Right cardiac atrium (tissue), 5 donors: ENCODE measurements at regions of chr3 and their contacts with region 1.

Region 1: DNA sequence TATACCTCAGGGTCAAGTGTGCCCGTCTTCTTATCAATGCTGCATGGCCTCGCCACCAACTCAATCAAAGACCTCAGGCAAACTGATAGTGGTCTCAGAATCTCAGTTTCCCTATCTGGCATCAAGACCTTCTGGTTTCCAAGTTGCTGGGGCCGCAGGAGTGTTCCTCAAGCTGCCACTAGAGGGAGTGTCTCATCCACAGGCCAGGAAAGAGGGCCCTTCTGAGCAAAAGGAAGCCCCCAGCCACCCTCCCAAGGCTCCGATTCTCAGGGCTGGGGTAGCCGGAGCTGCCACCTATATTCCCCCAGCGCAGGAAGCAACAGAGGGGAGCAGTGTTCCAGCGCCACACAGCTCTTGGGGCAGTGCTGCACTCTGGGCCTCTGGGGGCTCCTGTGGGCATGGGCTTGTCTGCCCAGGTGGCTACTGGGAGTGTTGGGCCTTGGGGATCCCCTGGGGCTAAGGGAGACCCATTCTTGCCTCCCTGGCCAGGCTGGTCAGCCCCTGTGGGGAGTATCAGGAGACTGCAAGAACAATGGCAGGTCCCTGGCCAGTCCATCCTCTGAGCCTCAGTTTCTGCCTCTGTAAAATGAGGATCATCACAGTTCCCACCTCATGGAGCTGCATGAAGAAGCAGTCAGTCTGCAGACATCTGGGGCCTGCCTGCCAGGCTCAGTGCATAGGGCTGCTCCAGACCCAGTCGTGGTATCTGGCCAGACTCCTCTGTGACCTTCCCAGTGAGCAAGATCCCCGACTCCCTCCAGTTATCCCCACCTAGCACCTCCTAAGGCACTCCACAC is 23.4 kb upstream of the SEC13 start:
- DNase-seq: peak in 2 of 3 donors; percentile 33 to 66
- ATAC-seq: peak in 1 of 2 donors; percentile 10
- H3K4me3 ChIP-seq: no peak overlapping the region
- H3K27ac ChIP-seq: no peak overlapping the region
- H3K4me1 ChIP-seq: no peaks in the 10 kb centered on the region
- H3K27me3 ChIP-seq: no peaks in the 10 kb centered on the region

Region 2: DNA sequence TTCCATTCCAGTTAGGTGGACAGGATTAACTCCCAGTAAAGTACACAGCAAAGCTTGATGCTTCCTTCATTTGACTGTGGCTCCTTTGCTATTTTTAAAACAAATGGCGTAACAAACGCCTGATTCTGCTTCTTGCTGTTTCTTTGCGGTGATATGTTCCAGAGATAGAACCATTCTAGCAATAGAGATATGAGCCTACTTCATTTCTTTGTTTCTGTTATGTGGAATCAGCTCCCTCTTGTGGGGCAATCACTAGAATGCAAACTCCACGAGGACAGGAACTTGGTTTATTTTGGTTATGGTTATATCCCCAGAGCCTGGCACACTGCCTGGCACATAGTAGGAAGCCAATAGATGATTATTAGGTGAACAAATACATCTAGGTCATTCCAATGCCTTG is 349.1 kb after region 1 on chr3:
- intact Hi-C with region 1: loop called in 1 of 4 experiments (anchors 10 kb)
- DNase-seq: no peak
- ATAC-seq: no peak
- H3K4me3 ChIP-seq: no peak overlapping the region
- H3K27ac ChIP-seq: no peak overlapping the region
- H3K4me1 ChIP-seq: no peaks in the 10 kb centered on the region
- H3K27me3 ChIP-seq: no peaks in the 10 kb centered on the region

Region 3: DNA sequence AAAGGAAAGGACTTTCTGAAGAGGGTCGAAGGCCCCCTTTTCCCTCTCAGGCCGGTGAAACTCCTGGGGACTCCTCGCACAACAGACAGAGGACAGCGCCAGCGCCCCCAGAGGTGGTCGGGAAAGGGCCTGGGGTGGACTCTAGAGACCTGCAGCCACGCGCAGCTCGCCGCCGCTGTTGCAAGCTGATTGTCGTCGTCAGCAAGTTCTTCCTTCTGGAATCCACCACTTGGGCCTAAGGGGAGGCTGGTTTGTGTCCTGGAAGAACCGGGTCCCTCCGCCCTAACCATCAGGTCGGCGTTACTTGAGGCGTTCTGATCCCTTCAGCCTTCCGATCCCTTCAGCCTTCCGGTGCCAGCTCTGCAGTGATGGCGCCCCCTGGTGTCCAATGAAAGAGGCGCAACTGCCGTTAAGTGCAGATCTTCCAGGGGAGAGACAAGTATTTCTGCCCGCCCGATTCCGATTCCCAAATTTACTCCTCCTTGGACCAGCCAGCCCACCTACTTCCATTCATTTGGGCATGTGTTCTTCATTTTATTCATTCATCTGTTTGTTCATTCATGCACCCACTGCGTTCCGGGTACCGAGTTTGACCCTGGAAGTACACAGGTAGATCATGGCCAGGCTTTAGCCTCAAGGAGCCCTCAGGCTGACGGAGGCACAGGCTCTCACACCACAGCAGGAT is 394.5 kb after region 1 on chr3:
- intact Hi-C with region 1: loop called (anchors 2 to 5 kb)
- DNase-seq: peak; percentile 65 to 85 (median 83)
- ATAC-seq: peak; percentile 52 to 85
- H3K4me3 ChIP-seq: peak overlapping the region; percentile 41
- H3K27ac ChIP-seq: no peak overlapping the region
- H3K4me1 ChIP-seq: no peaks in the 10 kb centered on the region
- H3K27me3 ChIP-seq: no peaks in the 10 kb centered on the region